GM12878 (cell line): ENCODE measurements at regions of chr7 and their contacts with region 1.

Region 1: DNA sequence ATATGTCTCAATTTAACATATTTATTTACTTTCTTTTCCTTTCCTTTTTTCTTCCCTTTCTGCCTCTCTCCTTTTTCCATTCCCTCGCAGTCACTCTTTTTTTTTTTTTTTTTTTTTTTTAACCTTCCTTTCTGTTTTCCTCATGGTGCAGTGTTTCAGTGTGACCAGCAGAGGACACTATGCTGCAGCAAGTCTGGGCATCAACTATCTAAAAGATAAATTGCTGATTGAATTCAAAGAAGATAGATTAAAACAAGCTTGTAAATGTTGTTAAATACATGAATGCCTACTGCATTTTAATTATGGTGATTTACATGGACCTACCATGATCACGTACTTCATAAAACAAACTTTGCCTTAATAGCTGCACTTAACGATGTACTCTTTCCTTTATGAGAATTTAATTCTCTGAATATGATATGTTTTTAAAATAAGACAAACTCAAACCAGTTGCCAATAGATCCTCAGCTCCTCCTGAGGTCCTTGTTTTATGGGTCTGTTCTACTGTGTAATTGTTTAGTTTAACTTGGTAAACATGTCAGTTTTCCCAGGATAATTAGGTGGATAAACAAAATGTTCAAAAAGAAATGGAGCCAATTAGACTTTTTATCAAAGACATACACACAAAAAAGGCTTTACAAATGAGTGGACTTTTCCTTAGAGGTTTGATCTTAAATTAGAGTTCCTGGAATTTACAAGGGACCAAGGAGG is 101.0 kb upstream of the AGR3 start:
- DNase-seq: no peak
- ATAC-seq: peak; percentile 46; the same call in 2 of the 3 replicates
- H3K4me3 ChIP-seq: no peak overlapping the region
- H3K27ac ChIP-seq: no peak overlapping the region
- H3K4me1 ChIP-seq: no peaks in the 10 kb centered on the region
- H3K27me3 ChIP-seq: no peaks in the 10 kb centered on the region
- CTCF ChIP-seq: peak; percentile 84 to 93 (median 93)
- EP300 ChIP-seq: no peak
- POLR2A ChIP-seq: no peak
- RAD21 ChIP-seq: peak; percentile 99

Region 2: DNA sequence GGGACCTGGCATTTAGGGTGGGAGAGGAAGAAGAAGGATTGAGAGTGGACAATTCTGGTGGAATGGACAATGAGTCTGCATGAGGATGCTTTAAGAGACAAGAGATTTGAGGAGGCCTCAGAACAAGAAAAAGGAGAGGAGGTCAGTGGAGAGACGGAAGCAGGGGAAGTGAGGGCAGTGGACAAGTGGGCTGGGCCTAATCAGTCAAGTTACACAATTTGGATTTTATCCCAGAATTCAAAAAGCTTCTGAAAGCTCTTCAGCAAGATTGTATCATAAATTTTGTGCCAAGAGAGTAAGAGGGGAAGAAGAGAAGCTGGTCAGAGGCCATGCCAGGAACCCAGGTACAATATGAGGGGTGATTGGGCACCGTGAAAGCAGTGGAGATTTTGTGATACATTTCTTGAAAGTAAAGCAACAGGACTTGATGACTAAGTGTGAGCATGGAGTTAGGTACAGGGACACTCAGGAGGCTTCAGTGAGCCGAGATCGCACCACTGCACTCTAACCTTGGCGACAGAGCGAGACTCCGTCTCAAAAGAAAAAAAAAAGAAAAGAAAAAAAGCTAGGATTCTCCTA is 248.6 kb before region 1 on chr7:
- CTCF ChIA-PET with region 1: no interaction called
- POLR2A ChIA-PET with region 1: no interaction called
- RAD21 ChIA-PET with region 1: no interaction called
- SMC1A ChIA-PET with region 1: no interaction called
- in situ Hi-C with region 1: no loop called
- intact Hi-C with region 1: no loop called
- DNase-seq: no peak
- ATAC-seq: no peak
- H3K4me3 ChIP-seq: no peak overlapping the region
- H3K27ac ChIP-seq: no peak overlapping the region
- H3K4me1 ChIP-seq: no peaks in the 10 kb centered on the region
- H3K27me3 ChIP-seq: no peaks in the 10 kb centered on the region; a peak in 1 of 4 replicates
- CTCF ChIP-seq: no peak
- EP300 ChIP-seq: no peak
- POLR2A ChIP-seq: no peak
- RAD21 ChIP-seq: no peak

Region 3: GRCh38 chr7:16926283-16926682 is 56.5 kb before region 1 on chr7:
- CTCF ChIA-PET with region 1: interaction called, 7 read pairs
- POLR2A ChIA-PET with region 1: no interaction called
- RAD21 ChIA-PET with region 1: no interaction called
- SMC1A ChIA-PET with region 1: no interaction called
- in situ Hi-C with region 1: no loop called
- intact Hi-C with region 1: loop called (anchors 2 kb)
- DNase-seq: no peak
- ATAC-seq: peak; percentile 71
- H3K4me3 ChIP-seq: no peak overlapping the region
- H3K27ac ChIP-seq: no peak overlapping the region
- H3K4me1 ChIP-seq: no peaks in the 10 kb centered on the region
- H3K27me3 ChIP-seq: no peaks in the 10 kb centered on the region
- CTCF ChIP-seq: peak; percentile 45 to 56 (median 52)
- EP300 ChIP-seq: no peak
- POLR2A ChIP-seq: no peak
- RAD21 ChIP-seq: peak; percentile 50

Region 4: DNA sequence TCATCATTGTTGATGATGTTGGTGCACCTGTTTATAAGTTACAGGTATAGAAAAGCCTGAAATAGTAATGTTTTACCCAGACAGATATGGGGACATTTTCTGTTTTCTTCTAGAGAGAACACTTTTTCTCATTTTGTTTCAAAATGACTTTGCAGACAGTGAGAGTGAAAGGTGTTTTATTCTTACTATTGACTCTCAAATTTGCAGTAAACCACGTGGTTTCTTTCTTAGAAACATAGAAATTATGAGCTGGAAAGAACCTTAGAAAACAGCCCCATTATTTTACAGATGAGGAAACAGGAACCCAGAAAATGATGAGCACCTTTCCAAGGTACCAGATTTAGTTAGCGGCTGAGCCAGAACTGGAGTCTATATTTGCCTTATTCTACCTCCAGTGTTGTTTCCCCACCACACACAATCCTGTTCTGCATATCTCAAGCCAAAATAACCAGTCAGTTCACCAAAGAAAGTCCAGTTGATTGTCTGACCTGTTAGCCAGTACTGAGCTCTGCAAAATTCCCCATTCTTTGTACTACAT is 176.8 kb after region 1 on chr7:
- CTCF ChIA-PET with region 1: interaction called, 4 read pairs
- POLR2A ChIA-PET with region 1: no interaction called
- RAD21 ChIA-PET with region 1: no interaction called
- SMC1A ChIA-PET with region 1: no interaction called
- in situ Hi-C with region 1: no loop called
- intact Hi-C with region 1: loop called (anchors 2 kb)
- DNase-seq: peak; percentile 77
- ATAC-seq: peak; percentile 91
- H3K4me3 ChIP-seq: no peak overlapping the region
- H3K27ac ChIP-seq: peak overlapping the region; percentile 9; the same call in 1 of the 2 replicates
- H3K4me1 ChIP-seq: peaks cover 14% of the 10 kb centered on the region
- H3K27me3 ChIP-seq: no peaks in the 10 kb centered on the region
- CTCF ChIP-seq: no peak
- EP300 ChIP-seq: peak; percentile 74 to 86; a peak in 3 of 4 replicates
- POLR2A ChIP-seq: no peak
- RAD21 ChIP-seq: 0 out of 2 replicates have a peak, but pooled peaks have one; percentile 7

Region 5: DNA sequence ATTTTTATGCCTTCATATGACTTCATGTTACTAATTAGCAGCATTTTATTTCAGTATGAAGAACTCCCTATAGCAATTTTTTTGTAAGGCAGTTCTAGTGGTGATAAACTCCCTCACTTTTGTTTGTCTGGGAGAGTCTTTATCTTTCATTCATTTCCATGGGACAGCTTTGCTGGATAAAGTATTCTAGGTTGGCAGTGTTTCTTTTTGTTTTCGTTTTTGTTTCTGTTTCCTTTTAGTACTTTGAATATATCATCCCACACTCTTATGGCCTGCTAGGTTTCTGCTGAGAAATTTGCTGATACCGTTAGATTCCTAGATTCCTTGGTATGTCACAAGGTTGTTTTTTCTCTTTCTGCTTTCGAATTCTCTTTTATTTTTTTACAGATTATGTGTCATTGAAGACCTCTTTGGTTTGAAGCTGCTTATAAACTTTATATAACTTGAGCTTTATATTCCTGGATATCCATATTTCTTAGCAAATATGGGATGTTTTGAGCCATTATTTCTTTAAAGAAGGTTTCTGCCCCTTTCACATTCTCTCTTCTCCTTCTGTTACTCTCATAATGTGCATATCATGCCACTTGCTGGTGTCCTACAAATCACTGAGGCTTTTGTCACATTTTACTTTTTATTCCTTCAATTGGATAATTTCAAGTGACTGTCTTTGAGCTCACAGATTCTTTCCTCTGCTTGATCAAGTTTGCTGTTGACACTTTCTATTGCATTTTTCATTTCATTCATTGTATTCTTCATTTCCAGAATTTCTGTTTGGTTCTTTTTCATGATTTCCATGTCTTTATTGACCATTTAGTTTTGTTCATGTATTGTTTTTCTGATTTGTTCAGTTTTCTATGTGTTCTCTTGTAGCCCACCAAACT is 286.8 kb after region 1 on chr7:
- CTCF ChIA-PET with region 1: no interaction called
- POLR2A ChIA-PET with region 1: no interaction called
- RAD21 ChIA-PET with region 1: no interaction called
- SMC1A ChIA-PET with region 1: no interaction called
- in situ Hi-C with region 1: no loop called
- intact Hi-C with region 1: no loop called
- DNase-seq: no peak
- ATAC-seq: no peak
- H3K4me3 ChIP-seq: no peak overlapping the region
- H3K27ac ChIP-seq: no peak overlapping the region
- H3K4me1 ChIP-seq: no peaks in the 10 kb centered on the region
- H3K27me3 ChIP-seq: no peaks in the 10 kb centered on the region
- CTCF ChIP-seq: no peak
- EP300 ChIP-seq: no peak
- POLR2A ChIP-seq: no peak
- RAD21 ChIP-seq: no peak

Region 6: DNA sequence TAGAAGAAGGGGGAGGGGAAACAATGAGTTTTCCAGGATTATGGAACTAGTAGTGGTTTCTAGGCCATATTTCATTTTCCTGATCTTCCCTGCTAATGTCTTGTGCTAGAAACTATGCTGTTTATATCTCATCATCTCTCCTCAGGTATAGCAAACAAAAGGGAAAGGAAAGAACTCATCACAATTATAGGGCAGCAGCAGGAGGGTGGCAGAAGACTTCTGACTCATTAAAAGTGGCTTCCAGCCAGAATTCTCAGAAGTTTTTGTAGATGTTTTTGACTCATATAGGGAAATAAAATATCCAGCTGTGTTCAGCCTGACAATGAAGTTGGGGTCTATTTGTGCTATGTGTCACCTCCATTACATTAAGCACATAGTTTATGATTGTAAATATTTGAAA is 322.1 kb after region 1 on chr7:
- CTCF ChIA-PET with region 1: interaction called, 92 read pairs
- POLR2A ChIA-PET with region 1: no interaction called
- RAD21 ChIA-PET with region 1: interaction called, 62 read pairs
- SMC1A ChIA-PET with region 1: interaction called, 34 read pairs
- in situ Hi-C with region 1: no loop called
- intact Hi-C with region 1: loop called (anchors 1 kb)
- DNase-seq: no peak
- ATAC-seq: peak; percentile 25
- H3K4me3 ChIP-seq: no peak overlapping the region
- H3K27ac ChIP-seq: no peak overlapping the region
- H3K4me1 ChIP-seq: peaks cover 3% of the 10 kb centered on the region
- H3K27me3 ChIP-seq: no peaks in the 10 kb centered on the region
- CTCF ChIP-seq: no peak
- EP300 ChIP-seq: no peak
- POLR2A ChIP-seq: no peak
- RAD21 ChIP-seq: no peak

Region 7: GRCh38 chr7:17546599-17546998 is 563.8 kb after region 1 on chr7:
- CTCF ChIA-PET with region 1: interaction called, 4 read pairs
- POLR2A ChIA-PET with region 1: no interaction called
- RAD21 ChIA-PET with region 1: no interaction called
- SMC1A ChIA-PET with region 1: no interaction called
- in situ Hi-C with region 1: no loop called
- intact Hi-C with region 1: loop called (anchors 5 kb)
- DNase-seq: no peak
- ATAC-seq: no peak
- H3K4me3 ChIP-seq: no peak overlapping the region
- H3K27ac ChIP-seq: no peak overlapping the region
- H3K4me1 ChIP-seq: no peaks in the 10 kb centered on the region
- H3K27me3 ChIP-seq: no peaks in the 10 kb centered on the region
- CTCF ChIP-seq: no peak
- EP300 ChIP-seq: no peak
- POLR2A ChIP-seq: no peak
- RAD21 ChIP-seq: no peak

Region 8: GRCh38 chr7:17646253-17646956 is 663.6 kb after region 1 on chr7:
- CTCF ChIA-PET with region 1: interaction called, 6 read pairs
- POLR2A ChIA-PET with region 1: no interaction called
- RAD21 ChIA-PET with region 1: interaction called, 5 read pairs
- SMC1A ChIA-PET with region 1: interaction called, 4 read pairs
- in situ Hi-C with region 1: loop called (anchors 10 kb)
- intact Hi-C with region 1: loop called (anchors 1 kb)
- DNase-seq: no peak
- ATAC-seq: no peak
- H3K4me3 ChIP-seq: no peak overlapping the region
- H3K27ac ChIP-seq: no peak overlapping the region
- H3K4me1 ChIP-seq: no peaks in the 10 kb centered on the region
- H3K27me3 ChIP-seq: no peaks in the 10 kb centered on the region; a peak in 2 of 4 replicates
- CTCF ChIP-seq: peak in 1 of 3 experiments; percentile 11; a peak in 2 of 6 replicates
- EP300 ChIP-seq: no peak
- POLR2A ChIP-seq: no peak
- RAD21 ChIP-seq: peak; percentile 42